B cell (primary cell): ENCODE measurements at regions of chr20 and their contacts with region 1.

Region 1: GRCh38 chr20:31605031-31605901 is at the start of gene ID1:
- DNase-seq: peak; percentile 92
- ATAC-seq: peak; percentile 90
- H3K4me3 ChIP-seq: peak within 1 kb of the TSS; percentile 50 to 79 (median 66)
- H3K4me3 Mint-ChIP-seq: peak within 1 kb of the TSS; percentile 96
- H3K27ac ChIP-seq: peak within 1 kb of the TSS in 1 of 2 donors; percentile 24
- H3K27ac Mint-ChIP-seq: peak within 1 kb of the TSS; percentile 74
- H3K4me1 ChIP-seq: peaks cover 24 to 26% of the 10 kb centered on the region in 2 donors
- H3K4me1 Mint-ChIP-seq: peaks cover 29% of the 10 kb centered on the region
- H3K27me3 ChIP-seq: peaks cover 0 to 66% (median 35%) of the 10 kb centered on the region in 4 experiments
- H3K27me3 Mint-ChIP-seq: peaks cover 45% of the 10 kb centered on the region
- CTCF ChIP-seq: peak; percentile 1
- total RNA-seq, gene ID1: 3.4 and 4.4 TPM in 2 replicates

Region 2: GRCh38 chr20:31494131-31494530 is 111.1 kb before region 1 on chr20:
- CTCF ChIA-PET with region 1: no interaction called
- POLR2A ChIA-PET with region 1: no interaction called
- intact Hi-C with region 1: no loop called
- DNase-seq: no peak
- ATAC-seq: no peak
- H3K4me3 ChIP-seq: no peak overlapping the region
- H3K4me3 Mint-ChIP-seq: no peak overlapping the region
- H3K27ac ChIP-seq: no peak overlapping the region
- H3K27ac Mint-ChIP-seq: no peak overlapping the region
- H3K4me1 ChIP-seq: no peaks in the 10 kb centered on the region
- H3K4me1 Mint-ChIP-seq: no peaks in the 10 kb centered on the region
- H3K27me3 ChIP-seq: peaks cover 0 to 5% (median 3%) of the 10 kb centered on the region in 4 experiments
- H3K27me3 Mint-ChIP-seq: peaks cover 25% of the 10 kb centered on the region
- CTCF ChIP-seq: no peak

Region 3: GRCh38 chr20:31514159-31515071 is 90.9 kb before region 1 on chr20 and contains the start of gene HM13:
- CTCF ChIA-PET with region 1: no interaction called
- POLR2A ChIA-PET with region 1: no interaction called
- intact Hi-C with region 1: loop called (anchors 2 kb)
- DNase-seq: peak; percentile 95
- ATAC-seq: peak; percentile 90
- H3K4me3 ChIP-seq: peak within 1 kb of the TSS; percentile 74 to 91 (median 89)
- H3K4me3 Mint-ChIP-seq: no peak within 1 kb of the TSS
- H3K27ac ChIP-seq: peak within 1 kb of the TSS; percentile 9 to 76
- H3K27ac Mint-ChIP-seq: no peak within 1 kb of the TSS
- H3K4me1 ChIP-seq: peaks cover 27 to 31% of the 10 kb centered on the region in 2 donors
- H3K4me1 Mint-ChIP-seq: peaks cover 9% of the 10 kb centered on the region
- H3K27me3 ChIP-seq: no peaks in the 10 kb centered on the region
- H3K27me3 Mint-ChIP-seq: no peaks in the 10 kb centered on the region
- CTCF ChIP-seq: peak; percentile 95
- total RNA-seq, gene HM13: 85.1 and 94.3 TPM in 2 replicates

Region 4: GRCh38 chr20:31560094-31560899 is 45.0 kb before region 1 on chr20:
- CTCF ChIA-PET with region 1: interaction called, 587 read pairs
- POLR2A ChIA-PET with region 1: no interaction called
- intact Hi-C with region 1: no loop called
- DNase-seq: peak; percentile 75
- ATAC-seq: peak; percentile 65
- H3K4me3 ChIP-seq: no peak overlapping the region
- H3K4me3 Mint-ChIP-seq: no peak overlapping the region
- H3K27ac ChIP-seq: no peak overlapping the region
- H3K27ac Mint-ChIP-seq: no peak overlapping the region
- H3K4me1 ChIP-seq: no peaks in the 10 kb centered on the region
- H3K4me1 Mint-ChIP-seq: no peaks in the 10 kb centered on the region
- H3K27me3 ChIP-seq: no peaks in the 10 kb centered on the region
- H3K27me3 Mint-ChIP-seq: no peaks in the 10 kb centered on the region
- CTCF ChIP-seq: peak; percentile 89

Region 5: GRCh38 chr20:31572701-31573554 is 32.3 kb before region 1 on chr20:
- CTCF ChIA-PET with region 1: interaction called, 327 read pairs
- POLR2A ChIA-PET with region 1: interaction called, 11 read pairs
- intact Hi-C with region 1: loop called (anchors 1 kb)
- DNase-seq: peak; percentile 90
- ATAC-seq: peak; percentile 94
- H3K4me3 ChIP-seq: peak overlapping the region; percentile 51 to 83 (median 71)
- H3K4me3 Mint-ChIP-seq: peak overlapping the region; percentile 92
- H3K27ac ChIP-seq: peak overlapping the region; percentile 49 to 76
- H3K27ac Mint-ChIP-seq: peak overlapping the region; percentile 80
- H3K4me1 ChIP-seq: peaks cover 10 to 18% of the 10 kb centered on the region in 2 donors
- H3K4me1 Mint-ChIP-seq: peaks cover 19% of the 10 kb centered on the region
- H3K27me3 ChIP-seq: no peaks in the 10 kb centered on the region
- H3K27me3 Mint-ChIP-seq: no peaks in the 10 kb centered on the region
- CTCF ChIP-seq: no peak

Region 6: GRCh38 chr20:31578448-31579138 is 26.7 kb before region 1 on chr20:
- CTCF ChIA-PET with region 1: interaction called, 327 read pairs
- POLR2A ChIA-PET with region 1: interaction called, 10 read pairs
- intact Hi-C with region 1: loop called (anchors 1 kb)
- DNase-seq: no peak
- ATAC-seq: no peak
- H3K4me3 ChIP-seq: no peak overlapping the region
- H3K4me3 Mint-ChIP-seq: no peak overlapping the region
- H3K27ac ChIP-seq: no peak overlapping the region
- H3K27ac Mint-ChIP-seq: no peak overlapping the region
- H3K4me1 ChIP-seq: peaks cover 3 to 6% of the 10 kb centered on the region in 2 donors
- H3K4me1 Mint-ChIP-seq: peaks cover 6% of the 10 kb centered on the region
- H3K27me3 ChIP-seq: no peaks in the 10 kb centered on the region
- H3K27me3 Mint-ChIP-seq: peaks cover 6% of the 10 kb centered on the region
- CTCF ChIP-seq: no peak

Region 7: GRCh38 chr20:31620252-31620651 is 15.0 kb after region 1 on chr20:
- CTCF ChIA-PET with region 1: no interaction called
- POLR2A ChIA-PET with region 1: no interaction called
- intact Hi-C with region 1: no loop called
- DNase-seq: no peak
- ATAC-seq: no peak
- H3K4me3 ChIP-seq: no peak overlapping the region
- H3K4me3 Mint-ChIP-seq: no peak overlapping the region
- H3K27ac ChIP-seq: no peak overlapping the region
- H3K27ac Mint-ChIP-seq: no peak overlapping the region
- H3K4me1 ChIP-seq: peaks cover 28 to 29% of the 10 kb centered on the region in 2 donors
- H3K4me1 Mint-ChIP-seq: peaks cover 26% of the 10 kb centered on the region
- H3K27me3 ChIP-seq: no peaks in the 10 kb centered on the region
- H3K27me3 Mint-ChIP-seq: no peaks in the 10 kb centered on the region
- CTCF ChIP-seq: no peak

Region 8: GRCh38 chr20:31644701-31645100 is 39.4 kb after region 1 on chr20:
- CTCF ChIA-PET with region 1: no interaction called
- POLR2A ChIA-PET with region 1: no interaction called
- intact Hi-C with region 1: no loop called
- DNase-seq: no peak
- ATAC-seq: no peak
- H3K4me3 ChIP-seq: no peak overlapping the region
- H3K4me3 Mint-ChIP-seq: no peak overlapping the region
- H3K27ac ChIP-seq: no peak overlapping the region
- H3K27ac Mint-ChIP-seq: no peak overlapping the region
- H3K4me1 ChIP-seq: peaks cover under 1% of the 10 kb centered on the region in 2 donors
- H3K4me1 Mint-ChIP-seq: peaks cover under 1% of the 10 kb centered on the region
- H3K27me3 ChIP-seq: no peaks in the 10 kb centered on the region
- H3K27me3 Mint-ChIP-seq: peaks cover 8% of the 10 kb centered on the region
- CTCF ChIP-seq: no peak